ENCODE measurements at regions of chr11 and their contacts with region 1.

Region 1: DNA sequence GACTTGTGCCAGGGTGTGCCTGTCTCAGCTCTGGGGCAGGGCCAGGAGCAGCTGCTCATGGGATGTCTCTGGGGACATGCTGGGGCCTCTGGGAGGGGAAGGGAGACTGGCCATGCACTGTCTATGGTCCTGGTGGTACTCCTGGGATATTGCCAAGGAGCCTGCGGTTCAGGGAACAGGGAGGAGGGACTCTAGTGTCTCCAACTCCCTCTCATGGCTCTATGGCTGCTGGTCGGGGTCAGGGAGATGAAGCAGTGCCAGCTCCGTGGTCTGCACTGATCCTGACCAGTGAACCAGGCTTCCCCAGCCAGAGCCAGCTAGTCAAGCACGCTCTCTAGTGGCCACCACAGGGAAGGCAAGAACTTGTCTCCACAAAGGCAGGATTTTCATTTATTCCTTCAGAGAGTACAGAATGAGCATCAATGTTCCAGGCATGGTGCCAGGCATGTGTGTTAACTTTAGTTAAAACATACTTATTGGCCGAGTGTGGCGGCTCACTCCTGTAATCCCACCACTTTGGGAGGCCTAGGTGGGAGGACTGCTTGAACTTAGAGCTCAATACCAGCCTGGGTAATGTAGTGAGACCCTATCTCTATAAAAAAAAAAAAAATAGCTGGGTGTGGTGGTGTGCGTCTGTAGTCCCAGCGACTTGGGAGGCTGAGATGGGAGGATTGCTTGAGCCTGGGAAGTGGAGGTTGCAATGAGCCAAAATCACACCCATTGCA is 2.5 kb upstream of the BEST1 start:
- DNase-seq: no peak
- ATAC-seq: peak; percentile 93
- H3K4me3 ChIP-seq: no peak overlapping the region
- H3K27ac ChIP-seq: no peak overlapping the region
- H3K4me1 ChIP-seq: no peaks in the 10 kb centered on the region
- H3K27me3 ChIP-seq: no peaks in the 10 kb centered on the region; a peak in 1 of 4 replicates
- CTCF ChIP-seq: peak; percentile 94 to 98 (median 96)
- EP300 ChIP-seq: no peak
- POLR2A ChIP-seq: no peak
- RAD21 ChIP-seq: peak; percentile 94

Region 2: DNA sequence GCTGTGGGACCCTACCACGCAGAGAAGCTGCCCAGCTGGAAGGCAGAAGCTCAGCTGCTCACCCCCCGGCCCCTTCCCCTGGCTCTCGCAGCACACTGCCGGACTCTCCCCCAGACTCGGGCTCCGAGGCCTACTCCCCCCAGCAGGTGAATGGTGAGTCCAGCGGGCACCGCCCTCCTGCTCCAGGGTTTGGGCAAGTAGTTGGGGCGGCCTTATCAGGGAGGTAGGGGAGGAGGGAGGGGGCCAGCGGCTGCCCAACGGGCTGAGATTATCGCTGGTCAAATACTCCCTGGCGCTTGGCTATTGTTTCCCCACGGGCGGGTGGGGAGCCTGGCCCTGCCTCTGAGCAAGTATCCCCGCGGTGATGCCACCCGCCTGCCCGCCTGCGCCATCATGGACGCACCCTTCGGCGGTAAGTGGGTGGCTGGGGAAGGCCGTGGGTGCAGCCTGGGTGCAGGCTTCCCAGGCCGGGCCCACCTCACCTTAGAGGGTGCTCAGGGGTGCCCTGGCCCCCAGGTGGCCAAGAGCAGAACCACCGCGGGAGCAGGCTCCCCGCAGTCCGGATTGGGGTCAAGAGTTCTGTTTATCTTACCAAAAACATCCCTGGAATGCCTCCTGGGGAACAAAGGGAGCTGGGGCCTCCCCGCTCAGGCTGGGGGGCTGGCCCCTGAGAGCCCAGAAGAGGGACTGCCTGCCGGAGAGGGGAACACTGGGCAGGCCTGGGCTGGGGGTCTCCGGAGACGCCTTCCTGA is 178.3 kb before region 1 on chr11:
- CTCF ChIA-PET with region 1: no interaction called
- POLR2A ChIA-PET with region 1: no interaction called
- RAD21 ChIA-PET with region 1: no interaction called
- SMC1A ChIA-PET with region 1: no interaction called
- in situ Hi-C with region 1: no loop called
- intact Hi-C with region 1: no loop called
- DNase-seq: no peak
- ATAC-seq: peak; percentile 44; the same call in 2 of the 3 replicates
- H3K4me3 ChIP-seq: no peak overlapping the region
- H3K27ac ChIP-seq: no peak overlapping the region
- H3K4me1 ChIP-seq: no peaks in the 10 kb centered on the region
- H3K27me3 ChIP-seq: no peaks in the 10 kb centered on the region
- CTCF ChIP-seq: no peak
- EP300 ChIP-seq: no peak
- POLR2A ChIP-seq: no peak
- RAD21 ChIP-seq: no peak

Region 3: GRCh38 chr11:61881397-61881796 is 66.3 kb before region 1 on chr11:
- CTCF ChIA-PET with region 1: interaction called, 16 read pairs
- POLR2A ChIA-PET with region 1: no interaction called
- RAD21 ChIA-PET with region 1: interaction called, 3 read pairs
- SMC1A ChIA-PET with region 1: interaction called, 5 read pairs
- in situ Hi-C with region 1: no loop called
- intact Hi-C with region 1: no loop called
- DNase-seq: no peak
- ATAC-seq: peak; percentile 43
- H3K4me3 ChIP-seq: no peak overlapping the region
- H3K27ac ChIP-seq: no peak overlapping the region
- H3K4me1 ChIP-seq: peaks cover 22% of the 10 kb centered on the region
- H3K27me3 ChIP-seq: no peaks in the 10 kb centered on the region; a peak in 1 of 4 replicates
- CTCF ChIP-seq: no peak
- EP300 ChIP-seq: no peak
- POLR2A ChIP-seq: no peak
- RAD21 ChIP-seq: no peak

Region 4: DNA sequence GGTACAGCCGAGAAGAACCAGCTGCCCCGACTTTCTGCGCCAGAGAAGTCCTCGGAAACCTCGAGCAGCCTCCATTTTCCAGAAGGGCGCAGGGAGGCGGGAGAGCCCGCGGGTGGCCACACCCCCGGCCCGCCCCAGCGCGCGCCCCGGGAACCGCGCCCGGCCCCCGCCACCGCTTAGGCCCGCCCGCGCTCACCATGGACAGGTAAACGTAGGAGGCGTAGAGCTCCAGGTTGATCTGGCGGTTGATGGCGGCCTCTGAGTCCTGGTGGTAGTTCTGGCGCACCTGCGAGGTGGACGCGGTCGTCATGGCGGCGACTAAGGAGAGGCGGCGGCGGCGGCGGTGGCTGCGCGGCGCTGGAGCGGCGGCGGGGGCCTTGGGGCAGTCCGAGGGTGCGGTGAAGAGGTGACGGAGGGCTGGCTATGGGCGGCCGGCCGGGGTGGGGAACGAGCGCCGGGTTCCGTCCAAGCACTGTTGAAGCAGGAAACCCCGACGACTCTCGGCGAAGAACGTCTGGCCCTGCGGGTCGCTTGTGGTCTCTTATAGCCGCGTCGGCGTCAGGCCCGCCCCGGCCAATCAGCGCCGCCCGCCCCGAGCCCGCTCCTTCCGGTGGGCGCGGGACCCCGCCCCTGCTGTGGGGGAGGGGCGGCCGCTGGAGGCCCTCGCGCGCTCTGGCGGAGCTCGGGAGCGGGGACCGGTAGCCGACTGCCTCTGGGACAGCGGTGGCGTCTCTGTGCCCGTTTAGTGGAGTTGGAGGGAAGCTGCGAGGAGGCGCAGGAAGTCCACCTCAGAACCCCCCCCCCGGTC is 19.7 kb after region 1 on chr11 and contains the start of gene FTH1:
- CTCF ChIA-PET with region 1: interaction called, 49 read pairs
- POLR2A ChIA-PET with region 1: interaction called, 4 read pairs
- RAD21 ChIA-PET with region 1: interaction called, 6 read pairs
- SMC1A ChIA-PET with region 1: interaction called, 9 read pairs
- in situ Hi-C with region 1: no loop called
- intact Hi-C with region 1: no loop called
- DNase-seq: no peak
- ATAC-seq: peak; percentile 72
- H3K4me3 ChIP-seq: peak within 1 kb of the TSS; percentile 100
- H3K27ac ChIP-seq: peak within 1 kb of the TSS; percentile 96
- H3K4me1 ChIP-seq: peaks cover 47% of the 10 kb centered on the region
- H3K27me3 ChIP-seq: no peaks in the 10 kb centered on the region
- CTCF ChIP-seq: no peak
- EP300 ChIP-seq: no peak
- POLR2A ChIP-seq: peak; percentile 79
- RAD21 ChIP-seq: no peak
- polyA plus RNA-seq, gene FTH1: 295 to 816 TPM

Region 5: GRCh38 chr11:62061351-62062222 is 113.9 kb after region 1 on chr11:
- CTCF ChIA-PET with region 1: interaction called, 19 read pairs
- POLR2A ChIA-PET with region 1: no interaction called
- RAD21 ChIA-PET with region 1: interaction called, 5 read pairs
- SMC1A ChIA-PET with region 1: interaction called, 9 read pairs
- in situ Hi-C with region 1: no loop called
- intact Hi-C with region 1: no loop called
- DNase-seq: no peak
- ATAC-seq: no peak
- H3K4me3 ChIP-seq: no peak overlapping the region
- H3K27ac ChIP-seq: no peak overlapping the region
- H3K4me1 ChIP-seq: no peaks in the 10 kb centered on the region
- H3K27me3 ChIP-seq: peaks cover 0 to 1% of the 10 kb centered on the region in 2 experiments; a peak in 1 of 4 replicates
- CTCF ChIP-seq: peak in 2 of 3 experiments; percentile 11 to 21; a peak in 1 of 6 replicates
- EP300 ChIP-seq: no peak
- POLR2A ChIP-seq: no peak
- RAD21 ChIP-seq: no peak